K562 (cell line): ENCODE measurements at regions of chr16 and their contacts with region 1.

Region 1: DNA sequence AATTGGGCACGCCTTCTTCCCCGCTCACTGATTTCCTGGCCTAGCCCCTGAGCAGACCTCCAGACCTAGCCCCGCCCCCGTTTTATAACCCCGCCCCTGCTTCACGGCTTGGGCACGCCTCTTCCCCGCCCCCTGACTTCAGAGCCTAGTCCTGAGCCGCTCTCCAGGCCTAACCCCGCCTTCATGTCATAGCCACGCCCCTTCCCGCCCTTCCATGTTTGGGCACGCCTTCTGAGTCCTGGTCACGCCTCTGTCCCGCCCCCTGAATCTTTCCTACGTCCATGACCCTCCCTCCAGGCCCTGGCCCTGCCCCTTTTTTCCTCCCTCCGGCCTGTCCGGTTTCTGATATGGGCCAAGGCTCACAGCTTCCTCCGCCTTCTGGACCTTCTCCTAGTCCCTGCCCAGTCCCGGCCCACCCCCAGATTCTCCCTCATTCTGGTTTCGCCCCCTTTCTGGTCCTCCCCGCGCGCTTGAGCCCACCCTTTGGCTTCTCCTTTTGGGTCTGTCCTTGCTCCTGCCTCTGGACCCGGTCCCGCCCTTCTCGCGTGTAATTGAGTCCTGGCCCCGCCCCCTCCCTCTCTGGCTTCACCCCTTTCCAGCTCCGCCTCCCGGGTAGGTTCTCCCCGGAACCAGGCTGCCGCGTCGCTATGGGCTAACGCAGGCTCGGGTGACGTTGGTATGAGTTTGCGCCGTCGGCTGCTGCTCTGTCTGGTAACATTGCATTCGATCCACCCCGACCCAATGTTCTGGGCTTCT is 15.1 kb upstream of the EEF2K start:
- DNase-seq: peak; percentile 90 to 98 (median 93)
- ATAC-seq: peak; percentile 84
- H3K4me3 ChIP-seq: peak overlapping the region; percentile 59
- H3K27ac ChIP-seq: peak overlapping the region; percentile 96
- H3K4me1 ChIP-seq: peaks cover 25 to 32% of the 10 kb centered on the region in 2 experiments; a peak in 4 of 5 replicates
- H3K27me3 ChIP-seq: no peaks in the 10 kb centered on the region; a peak in 1 of 5 replicates
- CTCF ChIP-seq: 0 out of 6 replicates have a peak, but pooled peaks of 1 of the 3 experiments have one; percentile 2
- EP300 ChIP-seq: no peak
- POLR2A ChIP-seq: peak; percentile 94
- RAD21 ChIP-seq: no peak

Region 2: GRCh38 chr16:21158208-21159110 is 1032.5 kb before region 1 on chr16 and contains the start of gene LDAF1:
- CTCF ChIA-PET with region 1: interaction called, 3 read pairs
- POLR2A ChIA-PET with region 1: no interaction called
- in situ Hi-C with region 1: no loop called
- intact Hi-C with region 1: loop called (anchors 5 kb)
- DNase-seq: peak; percentile 90 to 92 (median 92)
- ATAC-seq: peak; percentile 99
- H3K4me3 ChIP-seq: peak within 1 kb of the TSS; percentile 70
- H3K27ac ChIP-seq: peak within 1 kb of the TSS; percentile 58; the same call in 2 of the 3 replicates
- H3K4me1 ChIP-seq: peaks cover 10 to 17% of the 10 kb centered on the region in 2 experiments
- H3K27me3 ChIP-seq: no peaks in the 10 kb centered on the region
- CTCF ChIP-seq: no peak; a peak in 1 of 6 replicates
- EP300 ChIP-seq: no peak
- POLR2A ChIP-seq: peak; percentile 77
- RAD21 ChIP-seq: no peak
- polyA plus RNA-seq, gene LDAF1: 13.7 to 20.1 TPM

Region 3: GRCh38 chr16:21952793-21953540 is 238.0 kb before region 1 on chr16 and contains the start of gene UQCRC2:
- CTCF ChIA-PET with region 1: interaction called, 3 read pairs
- POLR2A ChIA-PET with region 1: no interaction called
- in situ Hi-C with region 1: no loop called
- intact Hi-C with region 1: loop called (anchors 5 kb)
- DNase-seq: peak; percentile 91 to 94 (median 92)
- ATAC-seq: peak; percentile 96
- H3K4me3 ChIP-seq: peak within 1 kb of the TSS; percentile 92
- H3K27ac ChIP-seq: peak within 1 kb of the TSS; percentile 98
- H3K4me1 ChIP-seq: peaks cover 4 to 7% of the 10 kb centered on the region in 2 experiments; a peak in 3 of 5 replicates
- H3K27me3 ChIP-seq: no peaks in the 10 kb centered on the region
- CTCF ChIP-seq: no peak
- EP300 ChIP-seq: no peak; the same call in 1 of the 2 replicates
- POLR2A ChIP-seq: peak; percentile 94
- RAD21 ChIP-seq: no peak
- polyA plus RNA-seq, gene UQCRC2: 284 to 424 TPM

Region 4: DNA sequence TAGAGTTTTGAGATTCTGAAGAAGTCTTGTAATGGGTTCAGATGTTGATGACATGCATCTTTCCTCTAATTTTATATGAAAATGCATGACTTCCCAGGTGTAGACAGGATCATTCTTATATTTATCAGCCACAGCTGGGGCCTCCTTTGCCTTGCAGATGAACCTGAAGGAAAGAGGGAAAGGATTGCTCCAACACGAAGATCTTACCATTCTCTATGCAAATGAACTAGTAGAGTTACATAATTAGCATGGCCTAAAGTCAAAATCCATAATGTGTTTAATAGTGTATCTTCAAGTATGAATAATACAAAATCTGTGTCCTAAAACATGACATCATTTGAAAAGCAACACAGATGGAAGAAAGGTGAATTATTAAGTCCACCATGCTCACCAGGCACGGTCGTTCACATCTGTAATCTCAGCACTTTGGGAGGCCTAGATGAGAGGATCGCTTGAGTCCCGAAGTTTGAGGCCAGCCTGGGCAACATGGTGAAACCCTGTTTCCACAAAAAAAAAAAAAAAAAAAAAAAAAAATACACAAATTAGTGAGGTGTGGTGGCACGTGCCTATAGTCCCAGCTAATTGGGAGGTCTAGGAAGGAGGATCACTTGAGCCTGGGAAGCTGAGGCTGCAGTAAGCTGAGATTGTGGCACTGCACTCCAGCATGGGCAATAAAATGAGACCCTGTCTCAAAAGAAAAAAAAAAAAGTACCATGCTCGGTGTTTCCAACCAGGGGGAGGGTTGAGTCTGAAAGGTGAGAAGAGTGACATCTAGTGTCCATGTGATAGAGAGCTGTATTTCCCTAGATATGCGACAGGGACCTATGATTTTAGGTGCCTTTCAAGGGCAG is 92.3 kb before region 1 on chr16:
- CTCF ChIA-PET with region 1: no interaction called
- POLR2A ChIA-PET with region 1: no interaction called
- in situ Hi-C with region 1: no loop called
- intact Hi-C with region 1: loop called (anchors 5 kb)
- DNase-seq: peak; percentile 47 to 72 (median 58)
- ATAC-seq: peak; percentile 98
- H3K4me3 ChIP-seq: no peak overlapping the region
- H3K27ac ChIP-seq: no peak overlapping the region
- H3K4me1 ChIP-seq: no peaks in the 10 kb centered on the region
- H3K27me3 ChIP-seq: no peaks in the 10 kb centered on the region; a peak in 4 of 5 replicates
- CTCF ChIP-seq: peak; percentile 80 to 91 (median 83)
- EP300 ChIP-seq: no peak
- POLR2A ChIP-seq: no peak
- RAD21 ChIP-seq: peak; percentile 36 to 80

Region 5: DNA sequence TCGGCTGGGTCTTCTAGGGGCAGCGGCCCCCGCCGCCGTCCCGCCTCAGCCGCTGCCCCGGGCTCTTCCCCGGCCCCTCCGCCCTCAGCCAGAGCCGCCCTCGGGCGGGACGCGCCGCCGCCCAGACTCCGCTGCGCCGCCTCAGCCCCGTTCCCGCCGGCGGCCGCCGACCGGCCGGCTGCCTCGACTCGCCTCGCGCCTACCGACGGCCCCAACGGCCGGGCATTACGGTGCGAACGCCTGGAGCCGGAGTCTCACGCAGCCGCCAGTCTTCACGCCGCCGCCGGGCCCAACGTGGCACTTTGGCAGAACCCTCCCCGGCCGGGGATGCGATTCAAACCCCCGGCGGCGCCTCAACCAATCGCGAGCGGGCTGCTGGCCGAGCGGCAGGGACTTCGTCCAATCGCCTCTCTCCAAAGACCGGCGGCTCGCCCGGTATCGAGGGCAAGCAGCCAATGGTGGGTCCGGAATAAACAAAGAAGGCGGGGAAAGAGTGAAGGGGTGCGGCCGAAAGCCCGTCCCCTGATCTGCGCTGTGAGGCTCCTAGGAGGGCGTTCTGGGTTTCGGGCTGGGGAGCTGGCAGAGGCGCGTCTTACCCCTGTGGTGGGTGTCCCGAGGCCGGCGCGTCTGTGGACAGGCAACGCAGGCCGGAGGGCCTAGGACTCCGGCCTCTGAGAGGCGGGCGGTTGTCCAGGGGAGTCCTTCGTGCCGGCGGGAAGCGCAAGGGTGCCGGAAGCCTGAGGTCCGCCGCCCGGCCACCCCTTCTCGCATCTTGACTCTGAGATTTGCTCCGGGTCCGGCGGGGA is 183.6 kb after region 1 on chr16 and contains the start of gene CDR2:
- CTCF ChIA-PET with region 1: no interaction called
- POLR2A ChIA-PET with region 1: no interaction called
- in situ Hi-C with region 1: no loop called
- intact Hi-C with region 1: loop called (anchors 5 kb)
- DNase-seq: peak; percentile 98 to 100 (median 100)
- ATAC-seq: peak; percentile 96
- H3K4me3 ChIP-seq: peak within 1 kb of the TSS; percentile 86
- H3K27ac ChIP-seq: peak within 1 kb of the TSS; percentile 80
- H3K4me1 ChIP-seq: peaks cover 18 to 25% of the 10 kb centered on the region in 2 experiments; a peak in 4 of 5 replicates
- H3K27me3 ChIP-seq: no peaks in the 10 kb centered on the region
- CTCF ChIP-seq: no peak
- EP300 ChIP-seq: no peak
- POLR2A ChIP-seq: peak; percentile 79
- RAD21 ChIP-seq: no peak
- polyA plus RNA-seq, gene CDR2: 4.6 to 5.3 TPM